ENCODE measurements at regions of chr1 and their contacts with region 1.

Region 1: GRCh38 chr1:223748773-223749733 is 36.7 kb downstream of the CAPN2 start:
- DNase-seq: peak; percentile 39
- H3K4me3 Mint-ChIP-seq: peak overlapping the region; percentile 72
- H3K27ac Mint-ChIP-seq: peak overlapping the region; percentile 55
- H3K4me1 Mint-ChIP-seq: peaks cover 20% of the 10 kb centered on the region
- H3K27me3 Mint-ChIP-seq: no peaks in the 10 kb centered on the region

Region 2: DNA sequence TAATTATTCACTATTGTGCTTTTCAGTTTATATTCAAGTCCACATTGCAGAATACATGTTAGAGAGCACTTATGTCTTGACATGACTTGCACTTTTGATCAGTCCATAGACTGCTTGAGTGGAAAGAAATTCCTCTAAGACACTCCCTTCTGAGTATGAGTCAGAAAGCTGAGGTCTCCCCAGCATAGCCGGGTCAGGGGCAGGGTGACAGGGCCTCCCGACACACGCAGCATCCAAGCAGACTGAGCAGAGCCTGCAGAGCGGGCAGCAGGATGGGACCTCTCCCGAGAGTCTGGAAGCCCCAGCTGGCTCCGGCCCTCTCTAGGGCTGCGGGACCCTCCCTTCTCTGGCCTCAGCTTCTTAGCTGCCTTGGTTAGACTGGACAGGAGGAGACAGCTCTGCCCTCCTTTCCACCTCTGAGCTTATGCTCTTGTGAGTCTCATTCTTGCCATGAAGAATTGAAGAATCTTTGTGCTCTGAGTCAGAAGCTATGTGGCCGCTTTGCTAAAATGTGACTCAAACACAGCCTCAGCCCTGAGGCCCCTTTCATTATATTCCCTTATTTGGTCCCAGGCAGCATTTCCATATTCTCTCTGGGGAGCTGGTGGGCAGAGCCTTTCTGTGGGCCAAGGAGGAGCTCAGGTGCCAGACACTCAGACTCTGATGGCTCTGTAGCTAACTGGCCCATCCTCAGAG is 48.0 kb before region 1 on chr1:
- intact Hi-C with region 1: loop called (anchors 1 kb)
- DNase-seq: no peak
- H3K4me3 Mint-ChIP-seq: no peak overlapping the region
- H3K27ac Mint-ChIP-seq: peak overlapping the region; percentile 83
- H3K4me1 Mint-ChIP-seq: peaks cover 54% of the 10 kb centered on the region
- H3K27me3 Mint-ChIP-seq: peaks cover 4% of the 10 kb centered on the region

Region 3: DNA sequence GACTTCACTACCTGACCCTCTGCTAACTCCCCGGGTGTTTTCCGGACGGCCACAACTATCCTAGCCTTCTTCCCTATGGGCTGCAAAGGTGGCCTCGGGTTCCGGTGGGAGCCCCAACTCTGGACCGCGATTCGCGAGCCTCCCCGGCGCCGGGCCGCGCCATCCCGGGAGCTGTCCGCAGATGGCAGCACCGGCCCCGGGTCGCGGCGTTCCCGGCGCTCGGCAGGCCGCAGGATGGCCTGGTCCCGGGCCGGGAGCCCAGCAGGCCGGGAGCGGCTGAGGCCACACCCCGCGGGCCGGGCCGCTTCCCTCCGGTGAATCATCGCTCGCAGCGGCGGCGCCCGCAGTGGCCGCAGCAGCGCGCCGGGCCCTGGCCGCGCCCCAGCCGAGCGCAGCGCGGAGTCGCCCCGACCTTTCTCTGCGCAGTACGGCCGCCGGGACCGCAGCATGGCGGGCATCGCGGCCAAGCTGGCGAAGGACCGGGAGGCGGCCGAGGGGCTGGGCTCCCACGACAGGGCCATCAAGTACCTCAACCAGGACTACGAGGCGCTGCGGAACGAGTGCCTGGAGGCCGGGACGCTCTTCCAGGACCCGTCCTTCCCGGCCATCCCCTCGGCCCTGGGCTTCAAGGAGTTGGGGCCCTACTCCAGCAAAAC is 36.7 kb before region 1 on chr1 and contains the start of gene CAPN2:
- intact Hi-C with region 1: loop called (anchors 1 kb)
- DNase-seq: peak; percentile 58
- H3K4me3 Mint-ChIP-seq: peak within 1 kb of the TSS; percentile 80
- H3K27ac Mint-ChIP-seq: peak within 1 kb of the TSS; percentile 88
- H3K4me1 Mint-ChIP-seq: peaks cover 62% of the 10 kb centered on the region
- H3K27me3 Mint-ChIP-seq: peaks cover 2% of the 10 kb centered on the region
- total RNA-seq, gene CAPN2: 66.3 and 70.4 TPM in 2 replicates

Region 4: DNA sequence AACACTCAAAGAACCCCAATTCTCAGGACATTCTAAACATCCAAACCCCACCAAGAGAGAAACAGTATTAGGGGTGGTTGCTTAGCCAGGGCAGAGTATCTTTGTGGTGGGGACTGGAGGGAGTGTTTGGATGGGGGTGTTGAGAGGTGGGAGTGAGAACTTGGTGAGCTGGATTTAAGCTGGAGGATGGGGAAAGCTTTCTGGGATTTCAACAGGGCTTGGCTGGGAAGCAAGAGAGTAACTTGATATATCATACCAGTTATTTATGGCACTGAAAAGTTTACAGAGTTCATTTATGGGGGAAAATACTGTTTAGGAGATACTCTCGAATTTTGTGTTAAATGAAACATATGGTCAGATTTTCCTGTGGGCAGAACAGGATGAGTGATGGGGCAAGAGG is 860.3 kb after region 1 on chr1:
- intact Hi-C with region 1: no loop called
- DNase-seq: no peak
- H3K4me3 Mint-ChIP-seq: no peak overlapping the region
- H3K27ac Mint-ChIP-seq: no peak overlapping the region
- H3K4me1 Mint-ChIP-seq: no peaks in the 10 kb centered on the region
- H3K27me3 Mint-ChIP-seq: peaks cover 43% of the 10 kb centered on the region